ENCODE measurements at regions of chr4 and their contacts with region 1.

Region 1: GRCh38 chr4:114077610-114078009 is 98.2 kb upstream of the ARSJ start:
- DNase-seq: no peak
- ATAC-seq: no peak
- H3K4me3 ChIP-seq: no peak overlapping the region
- H3K27ac ChIP-seq: no peak overlapping the region
- H3K4me1 ChIP-seq: no peaks in the 10 kb centered on the region
- H3K27me3 ChIP-seq: no peaks in the 10 kb centered on the region
- CTCF ChIP-seq: no peak
- EP300 ChIP-seq: no peak
- POLR2A ChIP-seq: no peak
- RAD21 ChIP-seq: no peak

Region 2: DNA sequence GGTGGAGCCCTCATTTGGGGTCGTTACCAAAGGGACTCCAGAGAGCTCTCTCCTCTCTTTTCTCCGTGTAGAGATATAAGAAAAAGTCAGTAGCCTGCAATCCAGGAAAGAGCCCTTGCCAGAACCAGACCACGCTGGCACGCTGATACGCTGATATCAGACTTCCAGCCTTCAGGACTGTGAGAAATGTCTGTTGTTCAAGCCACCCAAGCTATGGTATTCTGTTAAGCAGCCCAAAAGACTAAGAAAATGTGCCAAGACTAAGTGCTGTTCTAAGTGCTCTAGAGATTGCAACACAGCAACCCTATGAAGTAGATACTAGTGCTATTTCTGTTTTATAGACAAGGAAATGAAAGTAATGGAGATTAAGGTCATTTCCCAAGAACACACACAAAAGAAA is 521.7 kb before region 1 on chr4:
- CTCF ChIA-PET with region 1: no interaction called
- POLR2A ChIA-PET with region 1: no interaction called
- RAD21 ChIA-PET with region 1: no interaction called
- SMC1A ChIA-PET with region 1: no interaction called
- in situ Hi-C with region 1: no loop called
- intact Hi-C with region 1: loop called (anchors 5 kb)
- DNase-seq: no peak
- ATAC-seq: no peak
- H3K4me3 ChIP-seq: no peak overlapping the region
- H3K27ac ChIP-seq: no peak overlapping the region
- H3K4me1 ChIP-seq: no peaks in the 10 kb centered on the region
- H3K27me3 ChIP-seq: no peaks in the 10 kb centered on the region
- CTCF ChIP-seq: no peak
- EP300 ChIP-seq: no peak
- POLR2A ChIP-seq: no peak
- RAD21 ChIP-seq: no peak

Region 3: GRCh38 chr4:114057746-114058145 is 19.9 kb before region 1 on chr4:
- CTCF ChIA-PET with region 1: interaction called, 10 read pairs
- POLR2A ChIA-PET with region 1: no interaction called
- RAD21 ChIA-PET with region 1: no interaction called
- SMC1A ChIA-PET with region 1: no interaction called
- in situ Hi-C with region 1: no loop called
- intact Hi-C with region 1: no loop called
- DNase-seq: no peak
- ATAC-seq: no peak
- H3K4me3 ChIP-seq: no peak overlapping the region
- H3K27ac ChIP-seq: no peak overlapping the region
- H3K4me1 ChIP-seq: no peaks in the 10 kb centered on the region
- H3K27me3 ChIP-seq: no peaks in the 10 kb centered on the region
- CTCF ChIP-seq: no peak
- EP300 ChIP-seq: no peak
- POLR2A ChIP-seq: no peak
- RAD21 ChIP-seq: no peak

Measured in GM12878 (cell line).